Esophagus muscularis mucosa (tissue), 4 donors: ENCODE measurements at regions of chr6 and their contacts with region 1.

Region 1: DNA sequence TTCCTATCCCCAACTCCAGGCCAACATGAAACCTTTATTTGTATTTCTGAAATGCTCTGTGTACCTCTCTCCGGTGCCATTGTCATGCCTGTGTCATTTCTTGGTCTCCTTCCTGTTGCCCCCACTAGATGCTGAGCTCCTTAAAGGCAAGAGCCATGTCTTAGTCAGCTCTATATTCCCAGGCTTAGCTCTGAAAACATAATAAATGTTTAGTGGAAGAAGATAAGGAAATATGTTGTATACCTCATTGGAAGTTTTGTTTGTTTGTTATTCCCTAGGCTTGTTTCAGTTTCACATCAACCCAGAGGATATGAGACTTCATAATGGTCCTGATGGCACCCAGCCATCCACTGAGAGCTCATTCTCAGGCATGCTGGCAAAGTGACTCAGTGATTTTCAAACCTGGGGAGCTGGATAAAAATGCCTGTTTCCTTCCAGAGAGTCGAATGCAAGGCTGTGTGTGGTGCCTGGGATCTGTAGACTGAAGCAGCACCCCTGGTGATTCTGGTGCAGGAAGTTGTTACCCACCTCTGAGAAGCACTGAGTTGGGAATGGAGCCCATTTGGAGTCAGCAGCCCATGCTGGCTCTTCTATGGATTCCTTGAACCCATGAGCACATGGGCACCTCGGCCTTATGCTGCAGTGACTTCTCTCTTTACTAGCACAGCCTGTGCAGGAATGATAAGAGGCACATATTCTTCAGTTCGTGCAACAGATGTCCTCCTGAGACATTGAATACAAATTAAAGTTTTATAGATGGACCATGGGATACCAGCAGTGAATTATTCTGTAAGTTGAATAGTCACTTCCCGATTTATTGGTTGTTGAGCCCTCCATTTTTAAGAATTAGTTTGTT is 205.2 kb downstream of the FARS2 start:
- DNase-seq: no peak
- H3K4me3 ChIP-seq: no peak overlapping the region
- H3K27ac ChIP-seq: no peak overlapping the region
- H3K4me1 ChIP-seq: peaks cover 3 to 9% (median 5%) of the 10 kb centered on the region in 4 donors
- H3K27me3 ChIP-seq: no peaks in the 10 kb centered on the region
- CTCF ChIP-seq: no peak
- EP300 ChIP-seq: no peak
- POLR2A ChIP-seq: no peak

Region 2: GRCh38 chr6:5541751-5542432 is 75.4 kb after region 1 on chr6:
- intact Hi-C with region 1: no loop called
- DNase-seq: no peak
- H3K4me3 ChIP-seq: no peak overlapping the region
- H3K27ac ChIP-seq: no peak overlapping the region
- H3K4me1 ChIP-seq: peaks cover 0 to 5% (median 0%) of the 10 kb centered on the region in 4 donors
- H3K27me3 ChIP-seq: no peaks in the 10 kb centered on the region
- CTCF ChIP-seq: no peak
- EP300 ChIP-seq: no peak
- POLR2A ChIP-seq: no peak

Region 3: DNA sequence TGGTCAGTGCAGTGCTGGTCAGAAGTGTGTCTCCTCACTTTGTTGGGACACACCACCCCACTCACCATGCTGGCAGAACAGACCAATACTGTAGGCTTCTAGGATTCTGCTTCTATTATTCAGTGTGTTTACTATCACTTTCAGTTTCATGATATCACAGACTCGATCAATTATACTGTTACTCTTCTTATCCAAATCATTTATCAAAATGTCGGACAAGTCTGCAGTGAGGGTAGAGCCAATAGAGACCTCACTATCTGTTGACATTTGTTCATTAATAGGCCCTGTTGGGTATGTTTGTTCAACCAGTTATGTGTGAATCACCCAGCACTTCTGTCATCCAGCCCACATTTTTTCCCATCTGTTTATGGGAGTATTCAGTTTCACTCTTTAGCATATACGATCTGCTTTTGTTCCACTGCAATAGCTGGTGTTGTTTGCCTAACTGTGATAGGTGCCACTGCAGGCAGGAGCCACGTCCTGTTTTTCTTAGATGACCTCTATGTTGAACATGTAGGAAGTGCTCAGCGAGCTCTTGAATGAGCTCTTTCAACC is 400.1 kb after region 1 on chr6:
- intact Hi-C with region 1: loop called (anchors 10 kb)
- DNase-seq: no peak
- H3K4me3 ChIP-seq: peak overlapping the region; percentile 24 to 44 (median 31)
- H3K27ac ChIP-seq: peak overlapping the region in 3 of 4 donors; percentile 17 to 25 (median 18)
- H3K4me1 ChIP-seq: peaks cover 0 to 7% (median 2%) of the 10 kb centered on the region in 4 donors
- H3K27me3 ChIP-seq: no peaks in the 10 kb centered on the region
- CTCF ChIP-seq: no peak
- EP300 ChIP-seq: no peak
- POLR2A ChIP-seq: no peak

Region 4: DNA sequence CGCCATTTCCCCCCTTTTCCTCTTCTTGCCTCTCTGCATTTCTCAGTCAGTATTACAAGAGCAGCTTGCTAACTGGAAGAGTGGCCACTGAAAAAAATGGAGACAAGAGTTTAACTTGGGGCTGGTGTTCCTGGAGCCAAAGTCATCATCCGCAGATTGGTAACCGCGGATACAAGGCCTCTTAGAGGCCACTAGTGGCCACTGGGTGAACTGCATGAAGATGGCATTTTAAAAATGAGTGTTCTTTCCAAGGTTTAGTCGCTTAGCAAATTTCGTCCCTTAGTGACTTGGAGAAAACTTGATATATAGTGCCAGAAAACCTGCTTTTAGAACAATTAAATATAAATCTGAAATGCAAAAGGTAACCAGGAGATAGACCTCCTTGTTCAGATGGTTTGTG is 849.2 kb after region 1 on chr6:
- intact Hi-C with region 1: loop called (anchors 10 kb)
- DNase-seq: no peak
- H3K4me3 ChIP-seq: no peak overlapping the region
- H3K27ac ChIP-seq: no peak overlapping the region
- H3K4me1 ChIP-seq: peaks cover 0 to 14% (median 4%) of the 10 kb centered on the region in 4 donors
- H3K27me3 ChIP-seq: peaks cover 0 to 37% (median 0%) of the 10 kb centered on the region in 4 donors
- CTCF ChIP-seq: peak; percentile 73 to 84 (median 74)
- EP300 ChIP-seq: no peak
- POLR2A ChIP-seq: no peak